ENCODE measurements at regions of chr5 and their contacts with region 1.

Region 1: DNA sequence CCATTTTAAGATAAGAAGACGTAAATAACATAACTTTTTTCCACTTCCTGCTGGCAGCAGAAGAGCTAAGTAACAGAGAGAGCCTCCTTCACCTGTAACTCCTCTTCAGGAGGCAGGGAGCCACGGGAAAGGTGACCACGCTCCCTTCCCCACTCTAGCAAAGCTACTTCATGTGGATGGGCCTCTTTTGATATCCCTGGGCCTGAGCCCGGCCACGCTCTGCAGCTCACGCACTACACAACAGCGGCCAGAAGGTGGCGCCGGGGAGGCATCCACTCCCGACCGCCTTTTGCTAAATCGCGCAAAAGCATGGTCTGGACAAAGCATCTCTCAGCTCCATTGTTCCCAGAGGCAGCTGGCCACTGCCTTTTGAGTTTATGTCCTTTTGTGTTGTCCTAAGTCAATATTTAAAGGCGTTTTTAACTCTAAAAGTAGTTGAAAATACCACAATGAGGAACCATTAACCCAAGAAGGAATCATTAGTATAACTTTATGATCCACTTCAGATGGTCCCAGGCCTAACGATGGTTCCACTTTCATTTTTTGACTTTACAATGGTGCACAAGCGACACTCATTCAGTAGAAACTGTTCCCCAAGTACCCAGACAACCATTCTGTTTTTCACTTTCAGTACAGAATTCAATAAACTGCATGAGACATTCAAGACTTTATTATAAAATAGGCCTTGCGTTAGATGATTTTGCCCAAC is 23.6 kb downstream of the CMBL start:
- DNase-seq: peak; percentile 79 to 92
- ATAC-seq: peak; percentile 73

Region 2: GRCh38 chr5:10036136-10036815 is 247.8 kb before region 1 on chr5:
- intact Hi-C with region 1: no loop called
- DNase-seq: no peak
- ATAC-seq: no peak

Region 3: DNA sequence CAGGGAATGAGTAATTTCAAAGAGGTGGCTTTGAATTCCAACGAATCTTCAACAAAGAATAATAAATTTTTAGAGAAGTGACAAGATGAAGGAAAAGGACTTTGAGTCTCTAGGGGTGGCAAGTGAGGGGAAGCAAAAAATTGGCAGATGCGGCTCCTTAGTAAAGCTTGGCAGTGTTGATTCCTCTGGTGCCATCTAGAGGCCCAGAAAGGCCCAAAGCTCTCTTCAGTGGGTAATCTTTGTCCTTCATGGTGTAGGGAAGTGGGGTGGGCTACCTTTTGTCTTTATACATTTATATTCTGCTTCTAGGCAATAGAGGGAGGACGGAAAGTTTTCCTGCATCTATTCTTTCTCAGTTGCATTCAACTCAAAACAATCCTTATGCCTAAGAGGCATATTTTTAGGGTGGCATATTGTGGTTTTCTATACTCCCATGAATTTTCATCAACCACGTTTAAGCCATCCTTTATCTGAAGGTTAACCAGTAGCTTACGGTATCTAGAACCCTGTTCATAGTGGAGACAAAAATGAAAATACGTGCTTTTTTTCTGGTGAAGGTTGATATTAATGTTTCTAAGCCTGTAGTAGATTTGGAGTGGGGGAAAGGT is 140.1 kb after region 1 on chr5:
- intact Hi-C with region 1: loop called in 1 of 2 experiments (anchors 10 kb)
- DNase-seq: no peak
- ATAC-seq: peak; percentile 42

Region 4: DNA sequence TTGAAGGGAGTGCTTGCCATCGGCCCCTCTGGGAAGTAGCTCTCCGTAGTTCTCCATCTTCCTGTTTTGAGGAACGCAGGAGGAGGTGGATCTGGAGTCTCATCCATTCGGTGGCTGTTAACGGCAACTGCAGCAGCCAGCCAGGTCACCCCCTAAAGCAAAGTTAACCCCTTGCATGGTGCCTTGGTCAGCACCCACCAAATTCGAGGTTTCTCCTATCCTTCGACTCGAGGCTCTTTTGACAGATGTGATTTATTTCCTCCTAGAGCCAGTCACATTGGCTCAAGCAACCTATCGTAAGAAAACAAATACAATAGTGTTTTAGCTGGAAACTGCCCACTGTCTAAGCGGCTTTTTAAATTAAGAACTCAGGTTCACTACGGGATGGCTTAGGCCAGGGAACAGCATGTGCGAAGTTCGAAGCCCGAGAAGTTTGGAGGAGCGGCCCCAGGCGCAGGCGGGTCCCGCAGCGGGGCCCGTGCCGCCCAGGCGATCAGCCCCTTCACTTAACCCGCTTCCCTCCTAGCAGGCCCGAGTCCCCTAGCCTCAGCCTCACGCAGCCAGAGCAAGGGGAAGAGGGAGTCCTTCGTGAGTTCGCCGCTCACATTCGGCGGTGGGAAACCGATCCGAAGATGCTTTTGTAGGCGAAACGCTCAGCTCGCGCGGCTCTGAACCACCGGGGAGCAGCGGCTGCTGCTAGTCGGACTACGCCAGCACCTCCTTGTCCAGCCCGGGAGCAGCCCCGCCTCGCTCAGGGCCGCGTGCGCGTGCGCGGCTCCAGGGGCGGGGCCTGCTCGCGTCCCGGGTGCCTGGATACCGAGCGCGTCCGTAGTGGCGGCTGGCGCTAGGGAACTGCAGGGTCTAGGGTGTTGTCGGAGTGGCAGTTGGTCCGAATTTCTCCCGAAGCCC is 157.3 kb after region 1 on chr5 and contains the start of gene ROPN1L:
- intact Hi-C with region 1: loop called in 1 of 2 experiments (anchors 5 kb)
- DNase-seq: peak; percentile 82 to 88
- ATAC-seq: peak; percentile 98
- total RNA-seq, gene ROPN1L: not detected

Region 5: GRCh38 chr5:10627160-10627701 is 343.1 kb after region 1 on chr5:
- intact Hi-C with region 1: loop called in 1 of 2 experiments (anchors 10 kb)
- DNase-seq: no peak
- ATAC-seq: peak; percentile 3

Measured in left colon (tissue), 2 donors.